GM12878 (cell line): ENCODE measurements at regions of chr11 and their contacts with region 1.

Region 1: DNA sequence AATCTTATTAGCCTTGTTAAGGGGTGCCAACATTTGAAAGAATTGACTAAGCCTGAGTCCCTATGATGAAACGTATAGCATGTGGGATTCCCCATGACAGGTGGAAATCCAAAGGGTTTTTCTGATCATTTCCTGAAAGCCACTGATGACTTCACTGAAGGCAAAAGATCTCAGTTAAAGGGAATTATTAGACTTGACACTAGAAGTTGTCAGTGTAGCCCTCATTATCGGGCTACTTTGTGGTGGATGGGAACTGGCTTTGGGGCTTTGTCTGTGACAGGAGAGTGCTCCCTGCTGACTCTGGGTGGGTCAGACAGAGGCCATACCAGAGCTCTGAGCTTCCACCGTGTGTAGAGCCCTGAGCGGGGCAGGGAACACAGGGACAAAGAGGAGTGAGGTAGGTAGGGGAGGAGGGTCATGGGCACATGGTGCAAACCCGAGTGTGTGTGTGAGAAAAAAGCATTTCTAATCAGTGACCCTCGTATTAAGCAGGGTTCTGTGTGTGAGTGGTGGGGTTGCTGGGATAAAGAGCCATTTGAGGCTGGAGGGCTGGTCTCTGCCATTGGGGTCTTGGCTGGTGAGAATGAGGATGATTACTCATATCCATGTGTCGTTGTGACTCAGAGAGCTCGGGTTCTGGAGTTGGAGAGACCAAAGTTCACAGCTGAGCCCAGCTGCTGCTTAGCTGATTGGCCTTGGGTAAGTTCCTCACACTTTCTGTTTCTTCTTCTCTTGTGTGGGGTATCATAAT is 101.1 kb downstream of the GRIK4 start:
- DNase-seq: peak; percentile 94
- ATAC-seq: peak; percentile 91
- H3K4me3 ChIP-seq: no peak overlapping the region; the same call in 1 of the 2 replicates
- H3K27ac ChIP-seq: peak overlapping the region; percentile 75
- H3K4me1 ChIP-seq: peaks cover 32% of the 10 kb centered on the region
- H3K27me3 ChIP-seq: no peaks in the 10 kb centered on the region
- CTCF ChIP-seq: peak in 1 of 3 experiments; percentile 19; a peak in 1 of 6 replicates
- EP300 ChIP-seq: peak; percentile 76 to 89; a peak in 3 of 4 replicates
- POLR2A ChIP-seq: no peak; the same call in 1 of the 2 replicates
- RAD21 ChIP-seq: no peak

Region 2: GRCh38 chr11:120354068-120354467 is 258.6 kb before region 1 on chr11:
- CTCF ChIA-PET with region 1: no interaction called
- POLR2A ChIA-PET with region 1: no interaction called
- RAD21 ChIA-PET with region 1: no interaction called
- SMC1A ChIA-PET with region 1: no interaction called
- in situ Hi-C with region 1: no loop called
- intact Hi-C with region 1: no loop called
- DNase-seq: no peak
- ATAC-seq: no peak
- H3K4me3 ChIP-seq: no peak overlapping the region
- H3K27ac ChIP-seq: no peak overlapping the region
- H3K4me1 ChIP-seq: no peaks in the 10 kb centered on the region
- H3K27me3 ChIP-seq: no peaks in the 10 kb centered on the region
- CTCF ChIP-seq: no peak
- EP300 ChIP-seq: no peak
- POLR2A ChIP-seq: no peak
- RAD21 ChIP-seq: no peak

Region 3: GRCh38 chr11:120579611-120580031 is 33.1 kb before region 1 on chr11:
- CTCF ChIA-PET with region 1: interaction called, 3 read pairs
- POLR2A ChIA-PET with region 1: interaction called, 4 read pairs
- RAD21 ChIA-PET with region 1: interaction called, 5 read pairs
- SMC1A ChIA-PET with region 1: interaction called, 21 read pairs
- in situ Hi-C with region 1: no loop called
- intact Hi-C with region 1: no loop called
- DNase-seq: no peak
- ATAC-seq: peak; percentile 80
- H3K4me3 ChIP-seq: no peak overlapping the region
- H3K27ac ChIP-seq: no peak overlapping the region
- H3K4me1 ChIP-seq: peaks cover 19% of the 10 kb centered on the region
- H3K27me3 ChIP-seq: no peaks in the 10 kb centered on the region
- CTCF ChIP-seq: no peak
- EP300 ChIP-seq: no peak; a peak in 1 of 4 replicates
- POLR2A ChIP-seq: no peak
- RAD21 ChIP-seq: no peak

Region 4: DNA sequence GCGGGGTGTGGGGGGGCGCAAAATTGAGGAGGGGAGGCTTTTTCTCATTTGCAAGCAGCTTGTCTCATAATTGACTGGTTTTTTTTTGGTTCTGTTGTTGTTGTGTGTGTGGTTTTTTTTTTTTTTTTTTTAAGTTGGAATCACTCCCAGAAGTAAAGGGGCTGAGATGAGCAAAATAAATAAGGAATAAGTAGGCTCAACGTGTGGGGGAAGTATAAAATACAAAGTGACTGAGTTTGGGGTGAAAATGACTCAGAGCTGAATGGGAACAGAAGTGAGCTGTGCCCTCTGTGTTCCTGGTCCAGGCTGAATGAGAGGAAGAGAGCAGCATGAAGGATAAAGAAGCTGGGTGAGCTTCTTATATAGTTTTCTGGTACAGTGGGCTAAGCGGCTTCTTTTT is 11.2 kb before region 1 on chr11:
- CTCF ChIA-PET with region 1: interaction called, 7 read pairs
- POLR2A ChIA-PET with region 1: interaction called, 7 read pairs
- RAD21 ChIA-PET with region 1: interaction called, 19 read pairs
- SMC1A ChIA-PET with region 1: interaction called, 16 read pairs
- in situ Hi-C with region 1: no loop called
- intact Hi-C with region 1: no loop called
- DNase-seq: no peak
- ATAC-seq: no peak
- H3K4me3 ChIP-seq: no peak overlapping the region
- H3K27ac ChIP-seq: no peak overlapping the region
- H3K4me1 ChIP-seq: peaks cover 15% of the 10 kb centered on the region
- H3K27me3 ChIP-seq: no peaks in the 10 kb centered on the region
- CTCF ChIP-seq: no peak
- EP300 ChIP-seq: no peak
- POLR2A ChIP-seq: no peak
- RAD21 ChIP-seq: no peak

Region 5: DNA sequence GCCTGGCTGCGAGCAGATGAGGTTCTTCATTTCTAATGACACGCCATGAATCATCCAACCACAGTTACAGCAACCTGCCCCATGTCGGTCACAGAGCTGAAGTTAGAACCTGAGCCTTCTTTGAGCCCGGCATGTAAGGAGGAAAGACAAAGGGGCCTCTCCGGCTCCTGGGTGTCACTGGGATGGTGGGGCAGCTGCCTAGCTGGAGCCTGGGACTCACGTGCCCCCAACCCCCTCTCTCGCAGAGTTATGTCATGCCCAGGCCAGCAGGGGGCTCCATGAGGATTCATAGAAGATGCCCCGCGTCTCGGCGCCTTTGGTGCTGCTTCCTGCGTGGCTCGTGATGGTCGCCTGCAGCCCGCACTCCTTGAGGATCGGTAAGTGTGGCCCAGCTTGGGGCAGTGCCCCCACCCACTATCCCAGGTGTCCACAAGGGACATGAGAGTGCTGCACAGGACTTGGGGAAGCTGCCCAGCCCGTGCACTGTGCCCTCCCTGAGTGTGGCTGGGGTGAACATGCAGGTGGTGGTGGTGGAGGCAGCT is 47.4 kb after region 1 on chr11:
- CTCF ChIA-PET with region 1: interaction called, 20 read pairs
- POLR2A ChIA-PET with region 1: no interaction called
- RAD21 ChIA-PET with region 1: interaction called, 38 read pairs
- SMC1A ChIA-PET with region 1: interaction called, 25 read pairs
- in situ Hi-C with region 1: no loop called
- intact Hi-C with region 1: loop called (anchors 2 kb)
- DNase-seq: no peak
- ATAC-seq: peak; percentile 24
- H3K4me3 ChIP-seq: no peak overlapping the region
- H3K27ac ChIP-seq: no peak overlapping the region
- H3K4me1 ChIP-seq: peaks cover 35% of the 10 kb centered on the region
- H3K27me3 ChIP-seq: no peaks in the 10 kb centered on the region; a peak in 1 of 4 replicates
- CTCF ChIP-seq: peak; percentile 52 to 79 (median 72)
- EP300 ChIP-seq: no peak
- POLR2A ChIP-seq: no peak
- RAD21 ChIP-seq: peak; percentile 53

Region 6: GRCh38 chr11:120710354-120711131 is 97.9 kb after region 1 on chr11:
- CTCF ChIA-PET with region 1: interaction called, 9 read pairs
- POLR2A ChIA-PET with region 1: no interaction called
- RAD21 ChIA-PET with region 1: interaction called, 5 read pairs
- SMC1A ChIA-PET with region 1: interaction called, 3 read pairs
- in situ Hi-C with region 1: no loop called
- intact Hi-C with region 1: loop called (anchors 2 kb)
- DNase-seq: no peak
- ATAC-seq: peak; percentile 45
- H3K4me3 ChIP-seq: peak overlapping the region; percentile 12; the same call in 1 of the 2 replicates
- H3K27ac ChIP-seq: peak overlapping the region; percentile 63
- H3K4me1 ChIP-seq: peaks cover 47% of the 10 kb centered on the region
- H3K27me3 ChIP-seq: no peaks in the 10 kb centered on the region
- CTCF ChIP-seq: no peak
- EP300 ChIP-seq: no peak
- POLR2A ChIP-seq: no peak
- RAD21 ChIP-seq: no peak

Region 7: DNA sequence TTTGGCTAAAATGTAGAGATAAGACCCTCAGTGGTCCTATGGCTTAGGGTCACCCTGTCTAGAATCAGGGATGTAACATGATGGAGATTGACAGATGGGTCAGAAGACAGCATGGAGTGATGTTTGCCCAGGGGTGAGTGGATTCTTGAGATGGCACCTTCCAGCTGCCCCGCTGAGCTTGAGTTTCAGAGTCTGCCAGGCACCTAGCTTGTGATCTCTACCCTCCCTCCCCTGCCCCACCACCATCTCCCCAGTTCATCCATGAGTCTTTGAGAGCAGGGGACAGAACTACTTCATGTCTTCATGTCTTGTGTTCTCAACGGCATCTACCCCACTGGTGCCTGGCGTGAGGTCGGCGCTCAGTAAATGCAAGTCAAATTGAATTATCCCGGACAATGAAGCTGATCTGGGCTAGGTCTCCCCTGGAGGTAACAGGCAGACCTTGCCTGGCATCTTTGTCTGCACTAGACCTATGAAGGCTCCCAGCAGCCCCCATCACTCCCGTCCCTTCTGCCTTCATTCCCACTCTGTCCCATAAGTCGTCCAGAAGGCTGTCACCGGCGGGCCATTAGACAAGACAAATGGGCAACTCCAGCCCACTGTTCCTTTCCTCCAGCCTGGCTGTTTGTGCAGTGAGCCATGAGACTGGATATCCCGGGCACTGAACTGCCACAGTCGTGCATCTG is 172.0 kb after region 1 on chr11:
- CTCF ChIA-PET with region 1: no interaction called
- POLR2A ChIA-PET with region 1: no interaction called
- RAD21 ChIA-PET with region 1: no interaction called
- SMC1A ChIA-PET with region 1: no interaction called
- in situ Hi-C with region 1: no loop called
- intact Hi-C with region 1: no loop called
- DNase-seq: no peak
- ATAC-seq: no peak
- H3K4me3 ChIP-seq: no peak overlapping the region
- H3K27ac ChIP-seq: no peak overlapping the region
- H3K4me1 ChIP-seq: no peaks in the 10 kb centered on the region
- H3K27me3 ChIP-seq: no peaks in the 10 kb centered on the region; a peak in 1 of 4 replicates
- CTCF ChIP-seq: no peak
- EP300 ChIP-seq: no peak
- POLR2A ChIP-seq: no peak
- RAD21 ChIP-seq: no peak